AG04450 (cell line): ENCODE measurements at regions of chr14 and their contacts with region 1.

Region 1: DNA sequence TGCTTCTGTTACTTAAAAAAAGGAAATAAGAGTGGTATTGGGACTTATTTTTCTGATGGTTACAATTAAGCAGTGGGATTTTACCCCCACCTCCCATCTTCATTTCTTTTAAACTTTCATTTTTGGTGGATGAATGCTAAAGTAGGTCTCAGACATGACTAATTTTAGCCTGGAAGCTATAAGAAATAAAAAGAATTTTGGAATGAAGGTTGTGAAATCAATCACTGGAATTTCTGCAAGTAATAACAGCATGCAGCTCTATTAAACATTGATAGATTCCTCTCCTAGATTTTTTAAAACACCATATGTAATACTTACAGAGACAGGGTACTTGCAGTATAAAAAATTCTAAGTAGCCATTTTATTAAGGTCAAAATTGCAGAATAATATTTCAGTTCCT is 164.2 kb upstream of the CLEC14A start:
- DNase-seq: no peak
- H3K4me3 ChIP-seq: no peak overlapping the region
- H3K27ac ChIP-seq: no peak overlapping the region
- H3K27me3 ChIP-seq: no peaks in the 10 kb centered on the region
- CTCF ChIP-seq: no peak

Region 2: DNA sequence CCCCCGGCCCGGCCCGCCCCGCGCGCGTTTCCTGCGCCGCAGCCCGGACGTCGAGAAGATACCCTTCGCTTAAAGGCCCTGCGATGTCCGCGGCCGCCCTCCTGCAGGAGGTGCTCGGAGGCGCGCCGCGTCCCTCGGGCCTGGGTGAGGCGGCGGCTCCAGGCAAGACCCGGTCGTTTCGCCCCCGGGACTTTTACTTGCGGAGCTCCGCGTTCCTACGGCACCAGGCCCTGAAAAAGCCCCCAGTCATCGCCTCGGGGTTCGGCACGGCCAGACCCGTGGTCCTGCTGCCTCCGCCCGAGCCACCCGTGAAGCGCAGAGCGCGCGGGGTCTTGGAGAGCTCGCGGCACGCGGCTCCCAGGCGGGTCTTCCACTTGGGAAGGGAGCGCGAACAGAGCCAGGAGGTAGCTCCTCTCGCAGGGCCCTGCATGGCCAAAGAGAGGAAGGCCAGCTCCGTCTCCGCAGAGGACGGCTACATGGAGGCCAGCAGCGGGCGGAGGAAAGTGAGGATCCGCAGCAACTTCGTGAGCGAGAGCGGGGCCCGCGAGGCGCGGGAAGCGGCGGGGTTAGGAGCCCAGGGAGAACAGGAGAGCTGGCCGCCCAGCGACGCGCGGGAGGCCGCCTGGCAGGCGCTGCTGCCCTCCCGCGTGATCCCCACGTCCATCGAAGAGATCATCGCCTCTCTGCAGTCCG is 797.7 kb before region 1 on chr14:
- CTCF ChIA-PET with region 1: no interaction called
- POLR2A ChIA-PET with region 1: no interaction called
- DNase-seq: no peak
- H3K4me3 ChIP-seq: peak overlapping the region; percentile 49
- H3K27ac ChIP-seq: no peak overlapping the region
- H3K27me3 ChIP-seq: peaks cover 2% of the 10 kb centered on the region
- CTCF ChIP-seq: no peak

Region 3: DNA sequence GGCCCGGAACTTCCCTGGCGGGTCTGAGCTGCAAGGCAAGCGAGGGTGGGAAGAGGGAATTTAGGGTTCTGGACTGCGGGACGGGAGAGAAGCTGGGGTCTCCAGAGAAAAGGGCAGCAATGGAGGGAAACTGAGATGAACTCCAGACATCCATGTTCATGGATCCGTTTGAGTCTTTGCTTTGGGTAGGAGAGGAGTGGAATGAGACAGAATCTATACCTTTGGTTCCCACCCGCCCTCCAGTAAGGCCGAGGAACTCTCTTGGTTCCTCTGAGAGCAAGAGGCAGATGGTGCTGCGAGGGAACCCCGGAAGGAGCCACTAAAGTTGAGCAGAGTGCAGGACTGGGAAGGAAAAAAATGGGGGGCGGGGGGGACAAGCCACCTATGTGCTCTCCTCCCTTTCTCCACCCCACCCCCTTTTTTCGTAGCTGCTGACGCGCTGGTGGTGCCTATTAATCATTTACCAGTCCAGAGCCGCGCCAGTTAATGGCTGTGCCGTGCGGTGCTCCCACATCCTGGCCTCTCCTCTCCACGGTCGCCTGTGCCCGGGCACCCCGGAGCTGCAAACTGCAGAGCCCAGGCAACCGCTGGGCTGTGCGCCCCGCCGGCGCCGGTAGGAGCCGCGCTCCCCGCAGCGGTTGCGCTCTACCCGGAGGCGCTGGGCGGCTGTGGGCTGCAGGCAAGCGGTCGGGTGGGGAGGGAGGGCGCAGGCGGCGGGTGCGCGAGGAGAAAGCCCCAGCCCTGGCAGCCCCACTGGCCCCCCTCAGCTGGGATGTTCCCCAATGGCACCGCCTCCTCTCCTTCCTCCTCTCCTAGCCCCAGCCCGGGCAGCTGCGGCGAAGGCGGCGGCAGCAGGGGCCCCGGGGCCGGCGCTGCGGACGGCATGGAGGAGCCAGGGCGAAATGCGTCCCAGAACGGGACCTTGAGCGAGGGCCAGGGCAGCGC is 211.2 kb before region 1 on chr14:
- CTCF ChIA-PET with region 1: interaction called, 13 read pairs
- POLR2A ChIA-PET with region 1: no interaction called
- DNase-seq: no peak
- H3K4me3 ChIP-seq: peak overlapping the region; percentile 65
- H3K27ac ChIP-seq: no peak overlapping the region
- H3K27me3 ChIP-seq: peaks cover 3% of the 10 kb centered on the region
- CTCF ChIP-seq: peak; percentile 58

Region 4: GRCh38 chr14:38431156-38431555 is 11.1 kb after region 1 on chr14:
- CTCF ChIA-PET with region 1: no interaction called
- POLR2A ChIA-PET with region 1: no interaction called
- DNase-seq: no peak
- H3K4me3 ChIP-seq: no peak overlapping the region
- H3K27ac ChIP-seq: no peak overlapping the region
- H3K27me3 ChIP-seq: no peaks in the 10 kb centered on the region
- CTCF ChIP-seq: no peak